CD4-positive, alpha-beta T cell (primary cell): ENCODE measurements at regions of chr18 and their contacts with region 1.

Region 1: GRCh38 chr18:13159579-13159978 is 59.0 kb upstream of the LDLRAD4 start:
- DNase-seq: peak in 5 of 14 experiments; percentile 14 to 77 (median 67)
- ATAC-seq: peak; percentile 59
- H3K4me3 ChIP-seq: no peak overlapping the region
- H3K4me3 Mint-ChIP-seq: no peak overlapping the region
- H3K27ac ChIP-seq: no peak overlapping the region
- H3K27ac Mint-ChIP-seq: no peak overlapping the region
- H3K4me1 ChIP-seq: no peaks in the 10 kb centered on the region
- H3K4me1 Mint-ChIP-seq: no peaks in the 10 kb centered on the region
- H3K27me3 ChIP-seq: peaks cover 4 to 5% of the 10 kb centered on the region in 2 experiments
- H3K27me3 Mint-ChIP-seq: peaks cover 10% of the 10 kb centered on the region
- CTCF ChIP-seq: peak; percentile 85

Region 2: DNA sequence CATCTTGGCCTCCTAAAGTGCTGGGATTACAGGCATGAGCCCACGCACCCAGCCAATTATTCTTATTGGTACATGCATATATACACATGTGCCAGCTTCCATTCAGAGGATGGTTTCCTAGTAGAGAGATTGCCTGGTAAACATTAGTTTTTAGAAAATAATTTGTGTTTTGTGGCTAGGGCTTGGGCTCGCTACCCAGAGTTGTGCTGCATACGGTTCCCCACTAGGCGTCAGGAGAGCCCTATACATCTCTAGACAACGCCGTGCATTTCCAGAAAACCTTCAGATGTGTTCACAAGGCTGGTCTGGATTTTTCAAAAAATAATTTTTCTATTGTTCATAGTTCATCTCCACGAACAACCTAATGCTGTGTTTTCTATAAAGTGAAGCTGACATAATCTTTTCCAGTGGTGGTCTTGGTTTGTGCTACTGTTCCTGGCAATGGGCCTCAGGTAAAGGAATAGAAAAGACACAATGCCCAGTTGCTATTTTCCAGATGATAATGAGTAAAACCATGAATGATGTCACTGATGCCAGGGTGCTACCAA is 767.9 kb before region 1 on chr18:
- CTCF ChIA-PET with region 1: no interaction called
- POLR2A ChIA-PET with region 1: no interaction called
- intact Hi-C with region 1: loop called in 1 of 2 experiments (anchors 10 kb)
- DNase-seq: peak; percentile 22 to 75 (median 35)
- ATAC-seq: peak; percentile 99
- H3K4me3 ChIP-seq: no peak overlapping the region
- H3K4me3 Mint-ChIP-seq: no peak overlapping the region
- H3K27ac ChIP-seq: no peak overlapping the region
- H3K27ac Mint-ChIP-seq: no peak overlapping the region
- H3K4me1 ChIP-seq: no peaks in the 10 kb centered on the region
- H3K4me1 Mint-ChIP-seq: no peaks in the 10 kb centered on the region
- H3K27me3 ChIP-seq: peaks cover 0 to 3% of the 10 kb centered on the region in 2 experiments
- H3K27me3 Mint-ChIP-seq: peaks cover 12% of the 10 kb centered on the region
- CTCF ChIP-seq: peak; percentile 82

Region 3: GRCh38 chr18:12726774-12727550 is 432.6 kb before region 1 on chr18:
- CTCF ChIA-PET with region 1: no interaction called
- POLR2A ChIA-PET with region 1: no interaction called
- intact Hi-C with region 1: loop called (anchors 1 to 2 kb)
- DNase-seq: peak in 13 of 14 experiments; percentile 7 to 82 (median 44)
- ATAC-seq: peak; percentile 67
- H3K4me3 ChIP-seq: no peak overlapping the region
- H3K4me3 Mint-ChIP-seq: no peak overlapping the region
- H3K27ac ChIP-seq: no peak overlapping the region
- H3K27ac Mint-ChIP-seq: no peak overlapping the region
- H3K4me1 ChIP-seq: no peaks in the 10 kb centered on the region
- H3K4me1 Mint-ChIP-seq: peaks cover 2% of the 10 kb centered on the region
- H3K27me3 ChIP-seq: no peaks in the 10 kb centered on the region
- H3K27me3 Mint-ChIP-seq: no peaks in the 10 kb centered on the region
- CTCF ChIP-seq: peak; percentile 98

Region 4: GRCh38 chr18:12990967-12991838 is 168.4 kb before region 1 on chr18 and contains the start of gene CEP192:
- CTCF ChIA-PET with region 1: no interaction called
- POLR2A ChIA-PET with region 1: interaction called, 3 read pairs
- intact Hi-C with region 1: loop called in 1 of 2 experiments (anchors 10 kb)
- DNase-seq: peak; percentile 94 to 99 (median 95)
- ATAC-seq: peak; percentile 97
- H3K4me3 ChIP-seq: peak within 1 kb of the TSS; percentile 85
- H3K4me3 Mint-ChIP-seq: no peak within 1 kb of the TSS
- H3K27ac ChIP-seq: peak within 1 kb of the TSS; percentile 61 to 84
- H3K27ac Mint-ChIP-seq: peak within 1 kb of the TSS; percentile 83
- H3K4me1 ChIP-seq: peaks cover 32% of the 10 kb centered on the region
- H3K4me1 Mint-ChIP-seq: peaks cover 21% of the 10 kb centered on the region
- H3K27me3 ChIP-seq: no peaks in the 10 kb centered on the region
- H3K27me3 Mint-ChIP-seq: no peaks in the 10 kb centered on the region
- CTCF ChIP-seq: no peak
- total RNA-seq, gene CEP192: 23.4 to 25.0 TPM

Region 5: GRCh38 chr18:13003466-13003896 is 156.1 kb before region 1 on chr18:
- CTCF ChIA-PET with region 1: no interaction called
- POLR2A ChIA-PET with region 1: no interaction called
- intact Hi-C with region 1: loop called (anchors 10 kb)
- DNase-seq: peak in 4 of 14 experiments; percentile 5 to 30 (median 22)
- ATAC-seq: peak; percentile 24
- H3K4me3 ChIP-seq: no peak overlapping the region
- H3K4me3 Mint-ChIP-seq: no peak overlapping the region
- H3K27ac ChIP-seq: no peak overlapping the region
- H3K27ac Mint-ChIP-seq: no peak overlapping the region
- H3K4me1 ChIP-seq: no peaks in the 10 kb centered on the region
- H3K4me1 Mint-ChIP-seq: peaks cover 6% of the 10 kb centered on the region
- H3K27me3 ChIP-seq: no peaks in the 10 kb centered on the region
- H3K27me3 Mint-ChIP-seq: no peaks in the 10 kb centered on the region
- CTCF ChIP-seq: peak; percentile 20

Region 6: GRCh38 chr18:13112982-13113381 is 46.6 kb before region 1 on chr18:
- CTCF ChIA-PET with region 1: interaction called, 4 read pairs
- POLR2A ChIA-PET with region 1: no interaction called
- intact Hi-C with region 1: loop called in 1 of 2 experiments (anchors 1 kb)
- DNase-seq: peak in 2 of 14 experiments; percentile 19 to 38
- ATAC-seq: no peak
- H3K4me3 ChIP-seq: no peak overlapping the region
- H3K4me3 Mint-ChIP-seq: no peak overlapping the region
- H3K27ac ChIP-seq: no peak overlapping the region
- H3K27ac Mint-ChIP-seq: no peak overlapping the region
- H3K4me1 ChIP-seq: no peaks in the 10 kb centered on the region
- H3K4me1 Mint-ChIP-seq: no peaks in the 10 kb centered on the region
- H3K27me3 ChIP-seq: no peaks in the 10 kb centered on the region
- H3K27me3 Mint-ChIP-seq: no peaks in the 10 kb centered on the region
- CTCF ChIP-seq: no peak

Region 7: GRCh38 chr18:13137670-13138419 is 21.7 kb before region 1 on chr18:
- CTCF ChIA-PET with region 1: no interaction called
- POLR2A ChIA-PET with region 1: no interaction called
- intact Hi-C with region 1: loop called in 1 of 2 experiments (anchors 1 kb)
- DNase-seq: peak; percentile 37 to 93 (median 58)
- ATAC-seq: peak; percentile 76
- H3K4me3 ChIP-seq: peak overlapping the region; percentile 72
- H3K4me3 Mint-ChIP-seq: peak overlapping the region; percentile 98
- H3K27ac ChIP-seq: peak overlapping the region; percentile 48 to 50
- H3K27ac Mint-ChIP-seq: peak overlapping the region; percentile 92
- H3K4me1 ChIP-seq: peaks cover 27% of the 10 kb centered on the region
- H3K4me1 Mint-ChIP-seq: peaks cover 32% of the 10 kb centered on the region
- H3K27me3 ChIP-seq: no peaks in the 10 kb centered on the region
- H3K27me3 Mint-ChIP-seq: no peaks in the 10 kb centered on the region
- CTCF ChIP-seq: no peak